ENCODE measurements at regions of chr5 and their contacts with region 1.

Region 1: DNA sequence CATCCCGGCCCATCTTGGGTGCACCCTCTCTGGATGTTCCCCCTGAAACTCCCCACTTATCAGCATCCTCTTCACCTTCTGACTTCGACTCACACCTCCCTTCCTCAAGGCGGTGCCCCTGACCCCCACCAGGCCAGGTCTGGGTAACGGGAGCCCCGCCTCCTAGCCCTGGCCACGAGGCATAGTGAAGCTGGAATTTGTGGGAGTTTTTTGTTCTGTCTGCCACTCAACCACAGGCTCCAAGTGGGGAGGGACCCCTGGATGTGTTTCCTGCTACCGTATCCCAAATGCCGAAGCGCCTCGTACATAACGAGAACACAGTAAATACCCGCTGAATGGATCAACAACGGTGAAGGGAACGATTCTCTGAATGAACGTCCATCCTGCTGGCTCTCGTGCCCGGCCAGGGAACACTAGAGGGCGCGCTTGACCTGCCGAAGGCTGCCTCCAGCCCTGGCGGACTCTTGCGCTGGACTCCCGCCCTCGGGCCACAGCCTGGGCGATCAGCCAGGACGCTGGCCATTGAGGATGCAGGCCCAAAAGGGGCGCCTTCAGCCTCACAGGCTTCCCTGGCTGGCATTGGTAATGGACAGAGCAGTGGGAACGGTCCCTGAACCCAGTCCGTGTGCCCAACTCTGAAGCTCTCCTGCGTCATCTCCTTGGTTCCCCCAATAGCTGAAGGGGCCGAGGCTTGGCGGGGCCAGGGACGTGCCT is 47.3 kb upstream of the PHYKPL start:
- DNase-seq: peak; percentile 80 to 89
- H3K4me3 ChIP-seq: no peak overlapping the region
- H3K4me3 Mint-ChIP-seq: no peak overlapping the region
- H3K27ac Mint-ChIP-seq: no peak overlapping the region
- H3K4me1 ChIP-seq: peaks cover 4% of the 10 kb centered on the region; the same call in 1 of the 2 replicates
- H3K4me1 Mint-ChIP-seq: no peaks in the 10 kb centered on the region
- H3K27me3 ChIP-seq: no peaks in the 10 kb centered on the region
- H3K27me3 Mint-ChIP-seq: peaks cover 6% of the 10 kb centered on the region
- CTCF ChIP-seq: peak; percentile 93 to 96

Region 2: DNA sequence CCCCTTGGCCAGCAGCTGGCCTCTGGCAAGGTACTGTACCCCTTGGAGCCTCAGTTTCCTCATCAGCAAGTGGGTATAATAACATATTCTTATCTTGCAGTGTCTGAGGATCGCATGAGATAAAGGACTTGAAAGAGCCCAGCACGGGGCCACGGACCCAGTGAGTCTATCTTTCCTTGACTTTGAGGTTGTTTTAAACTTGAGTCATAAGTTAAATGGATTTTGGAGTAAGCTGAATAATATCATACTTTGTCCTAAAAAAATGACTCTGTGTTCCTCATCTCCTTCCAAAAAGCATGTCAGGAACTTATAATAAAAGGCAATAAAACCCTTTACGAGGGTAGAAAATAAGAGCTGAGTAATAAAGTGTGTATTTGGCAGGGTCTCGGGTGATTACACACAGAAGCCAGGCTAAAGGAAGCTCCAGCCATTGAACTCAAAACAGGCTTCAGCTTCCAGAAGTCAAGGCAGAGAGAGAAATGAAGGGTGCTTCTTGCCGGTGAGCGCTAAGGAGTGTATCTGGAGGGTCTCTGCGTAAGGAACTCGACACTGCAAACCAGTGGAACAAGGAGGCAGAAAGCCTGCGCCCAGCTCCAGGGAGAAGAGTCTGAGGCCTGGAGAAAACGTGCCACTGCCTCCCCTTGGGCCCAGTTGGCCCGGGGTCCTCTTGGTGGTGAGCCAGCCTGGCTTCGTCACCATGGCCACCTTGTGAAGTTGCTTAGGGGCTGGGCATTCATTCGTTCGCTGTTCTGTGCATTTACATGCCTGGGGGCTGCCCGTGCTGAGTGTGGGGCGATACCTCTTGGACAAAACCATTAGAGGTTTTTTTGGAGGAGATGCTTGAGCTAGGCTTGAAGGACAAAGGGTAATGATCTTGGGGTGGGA is 25.1 kb after region 1 on chr5:
- CTCF ChIA-PET with region 1: no interaction called
- POLR2A ChIA-PET with region 1: no interaction called
- intact Hi-C with region 1: no loop called
- DNase-seq: peak in 1 of 2 experiments; percentile 22
- H3K4me3 ChIP-seq: no peak overlapping the region
- H3K4me3 Mint-ChIP-seq: no peak overlapping the region
- H3K27ac Mint-ChIP-seq: no peak overlapping the region
- H3K4me1 ChIP-seq: no peaks in the 10 kb centered on the region
- H3K4me1 Mint-ChIP-seq: no peaks in the 10 kb centered on the region
- H3K27me3 ChIP-seq: no peaks in the 10 kb centered on the region
- H3K27me3 Mint-ChIP-seq: peaks cover 20% of the 10 kb centered on the region
- CTCF ChIP-seq: no peak

Region 3: DNA sequence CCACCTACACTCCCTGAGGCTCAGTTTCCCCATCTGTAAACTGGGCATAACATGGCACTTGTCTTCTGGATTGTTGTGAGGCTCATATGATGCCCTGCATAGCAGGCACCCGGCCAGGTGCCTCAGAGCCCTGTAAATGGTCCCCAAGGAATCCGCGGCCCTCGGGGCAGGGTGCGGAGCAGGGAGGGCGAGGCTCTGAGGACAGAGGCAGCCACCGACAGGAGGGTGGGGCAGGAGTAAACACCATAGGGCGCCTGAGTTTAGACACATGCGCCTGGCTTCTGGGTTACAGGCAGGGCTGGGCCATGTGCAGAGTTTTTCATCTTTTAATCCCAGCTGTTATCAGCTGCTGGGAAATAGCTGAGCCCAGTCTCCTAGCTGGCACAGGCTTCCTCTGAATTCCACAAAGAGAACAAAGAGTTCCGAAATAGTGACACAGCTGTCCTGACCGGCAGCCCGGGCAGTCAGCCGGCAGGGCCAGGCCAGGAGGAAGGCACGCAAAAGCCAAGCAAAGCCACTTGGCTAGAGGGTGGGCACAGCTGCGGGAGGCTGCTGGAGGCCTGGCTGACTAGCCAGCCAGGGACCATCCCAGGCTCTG is 51.6 kb after region 1 on chr5:
- CTCF ChIA-PET with region 1: no interaction called
- POLR2A ChIA-PET with region 1: no interaction called
- intact Hi-C with region 1: no loop called
- DNase-seq: peak; percentile 42 to 70
- H3K4me3 ChIP-seq: no peak overlapping the region
- H3K4me3 Mint-ChIP-seq: no peak overlapping the region
- H3K27ac Mint-ChIP-seq: peak overlapping the region; percentile 17
- H3K4me1 ChIP-seq: peaks cover 16% of the 10 kb centered on the region
- H3K4me1 Mint-ChIP-seq: peaks cover 12% of the 10 kb centered on the region
- H3K27me3 ChIP-seq: no peaks in the 10 kb centered on the region
- H3K27me3 Mint-ChIP-seq: peaks cover 1% of the 10 kb centered on the region
- CTCF ChIP-seq: no peak

Region 4: GRCh38 chr5:178590141-178590923 is 310.4 kb after region 1 on chr5 and contains the start of gene COL23A1:
- CTCF ChIA-PET with region 1: interaction called, 4 read pairs
- POLR2A ChIA-PET with region 1: no interaction called
- intact Hi-C with region 1: loop called (anchors 1 kb)
- DNase-seq: peak; percentile 59 to 60
- H3K4me3 ChIP-seq: peak within 1 kb of the TSS; percentile 47
- H3K4me3 Mint-ChIP-seq: peak within 1 kb of the TSS; percentile 80
- H3K27ac Mint-ChIP-seq: no peak within 1 kb of the TSS
- H3K4me1 ChIP-seq: 0 out of 2 replicates have a peak, but pooled peaks cover 5% of the 10 kb centered on the region
- H3K4me1 Mint-ChIP-seq: no peaks in the 10 kb centered on the region
- H3K27me3 ChIP-seq: no peaks in the 10 kb centered on the region
- H3K27me3 Mint-ChIP-seq: no peaks in the 10 kb centered on the region
- CTCF ChIP-seq: peak; percentile 48 to 80
- total RNA-seq, gene COL23A1: 0.09 and 0.18 TPM in 2 replicates